Endothelial cell of umbilical vein (primary cell): ENCODE measurements at regions of chr19 and their contacts with region 1.

Region 1: DNA sequence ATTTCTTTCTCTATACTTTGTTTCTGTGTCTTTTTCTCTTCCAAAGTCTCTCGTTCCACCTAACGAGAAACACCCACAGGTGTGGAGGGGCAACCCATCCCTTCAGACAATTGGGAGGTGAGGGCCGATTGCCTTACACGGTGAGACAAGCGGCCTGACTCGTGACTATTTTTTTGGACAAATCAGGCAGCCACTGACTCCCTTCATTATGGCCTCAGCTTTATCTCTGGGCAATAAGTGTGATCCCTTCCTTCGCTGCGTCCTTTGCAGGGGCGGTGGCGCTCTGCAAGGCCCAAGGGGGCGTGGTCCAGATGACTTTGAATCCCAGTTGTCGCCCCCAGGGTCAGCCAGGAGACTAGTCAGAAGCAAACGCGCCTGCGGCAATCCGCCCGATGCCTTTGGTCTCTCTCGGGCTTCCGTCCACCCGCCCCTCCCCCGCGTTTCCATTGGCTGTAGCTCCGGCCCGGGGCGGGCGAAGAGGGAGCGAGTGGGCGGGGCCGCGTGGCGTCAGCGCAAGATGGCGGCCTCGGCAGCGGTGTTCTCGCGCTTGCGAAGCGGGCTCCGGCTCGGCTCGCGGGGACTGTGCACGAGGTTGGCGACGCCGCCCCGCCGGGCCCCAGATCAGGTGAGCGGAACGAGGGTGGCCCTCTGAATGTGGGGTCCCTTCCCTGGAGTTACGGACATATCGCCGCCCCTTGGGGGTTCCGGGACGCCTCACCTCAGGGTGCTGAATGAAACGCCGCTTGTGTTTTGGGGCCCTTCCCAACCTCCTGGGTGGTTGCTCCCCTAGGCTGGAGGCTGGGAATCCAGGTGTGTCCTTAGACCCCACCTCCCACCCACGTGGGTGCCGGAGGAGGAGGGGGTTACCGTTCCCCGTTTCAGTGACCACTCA is at the start of gene TIMM50:
- DNase-seq: peak; percentile 95
- H3K4me3 ChIP-seq: peak within 1 kb of the TSS; percentile 77 to 100 (median 88)
- H3K27ac ChIP-seq: peak within 1 kb of the TSS; percentile 71
- H3K4me1 ChIP-seq: peaks cover 16% of the 10 kb centered on the region
- H3K27me3 ChIP-seq: no peaks in the 10 kb centered on the region
- CTCF ChIP-seq: no peak
- POLR2A ChIP-seq: peak; percentile 70
- total RNA-seq, gene TIMM50: 85.7 and 86.1 TPM in 2 replicates

Region 2: DNA sequence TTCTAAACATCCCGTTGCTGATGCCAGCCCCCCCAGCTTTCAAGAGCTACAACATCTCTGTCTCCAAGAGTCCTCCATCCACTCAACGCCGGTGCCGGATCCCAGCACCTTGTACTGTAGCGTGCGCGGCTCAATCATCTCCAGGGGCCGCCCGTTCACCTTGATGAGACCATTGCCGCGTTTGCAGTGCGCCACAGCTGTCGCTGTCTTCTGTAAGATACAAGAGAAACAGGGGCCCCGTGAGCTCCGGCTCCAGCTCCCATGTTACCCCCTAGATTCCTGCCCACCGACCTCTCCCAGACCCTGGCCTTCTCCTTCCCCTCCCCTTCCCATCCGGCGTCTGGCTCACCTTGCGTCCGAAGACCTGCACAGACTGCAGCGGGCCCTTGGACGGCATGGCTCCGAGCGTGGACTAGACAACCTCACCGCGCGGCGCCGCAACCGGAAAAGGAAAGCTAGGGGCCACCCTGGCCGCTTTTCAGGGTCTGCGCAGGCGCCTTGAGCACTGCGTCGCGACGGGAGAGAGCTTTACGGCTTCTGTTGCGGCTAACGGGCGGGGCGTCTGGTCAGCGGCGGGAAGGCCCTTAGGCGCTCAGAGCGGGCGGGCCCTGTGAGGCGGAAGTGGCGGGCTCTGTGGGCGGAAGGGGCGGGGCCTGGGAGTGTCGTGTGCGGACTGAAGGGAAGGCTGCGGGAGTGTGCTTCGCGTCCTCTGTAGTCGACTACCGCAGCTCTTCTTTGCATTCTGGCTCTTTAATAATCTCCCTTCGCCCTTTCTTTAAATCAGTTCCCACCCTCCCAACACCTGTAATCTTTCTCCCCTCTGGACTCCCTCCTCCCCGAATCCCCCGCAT is 44.9 kb before region 1 on chr19 and contains the start of gene RPS16:
- CTCF ChIA-PET with region 1: interaction called, 8 read pairs
- POLR2A ChIA-PET with region 1: interaction called, 10 read pairs
- dilution Hi-C with region 1: no loop called
- intact Hi-C with region 1: loop called (anchors 2 kb)
- DNase-seq: peak; percentile 98
- H3K4me3 ChIP-seq: peak within 1 kb of the TSS; percentile 96
- H3K27ac ChIP-seq: peak within 1 kb of the TSS; percentile 96
- H3K4me1 ChIP-seq: peaks cover 26% of the 10 kb centered on the region
- H3K27me3 ChIP-seq: no peaks in the 10 kb centered on the region
- CTCF ChIP-seq: no peak
- POLR2A ChIP-seq: peak; percentile 96
- total RNA-seq, gene RPS16: 1,735 and 1,768 TPM in 2 replicates

Region 3: GRCh38 chr19:39445265-39446111 is 35.1 kb before region 1 on chr19 and contains the start of gene SUPT5H:
- CTCF ChIA-PET with region 1: no interaction called
- POLR2A ChIA-PET with region 1: interaction called, 10 read pairs
- dilution Hi-C with region 1: no loop called
- intact Hi-C with region 1: loop called (anchors 1 kb)
- DNase-seq: peak; percentile 98
- H3K4me3 ChIP-seq: peak within 1 kb of the TSS; percentile 85 to 98 (median 94)
- H3K27ac ChIP-seq: peak within 1 kb of the TSS; percentile 94
- H3K4me1 ChIP-seq: peaks cover 20% of the 10 kb centered on the region
- H3K27me3 ChIP-seq: no peaks in the 10 kb centered on the region
- CTCF ChIP-seq: no peak
- POLR2A ChIP-seq: peak; percentile 81
- total RNA-seq, gene SUPT5H: 108 and 120 TPM in 2 replicates

Region 4: GRCh38 chr19:39502640-39503417 is 22.2 kb after region 1 on chr19:
- CTCF ChIA-PET with region 1: interaction called, 3 read pairs
- POLR2A ChIA-PET with region 1: no interaction called
- dilution Hi-C with region 1: no loop called
- intact Hi-C with region 1: loop called (anchors 2 kb)
- DNase-seq: peak; percentile 67
- H3K4me3 ChIP-seq: no peak overlapping the region
- H3K27ac ChIP-seq: no peak overlapping the region
- H3K4me1 ChIP-seq: peaks cover 10% of the 10 kb centered on the region
- H3K27me3 ChIP-seq: peaks cover 31 to 32% of the 10 kb centered on the region in 2 experiments
- CTCF ChIP-seq: peak; percentile 82
- POLR2A ChIP-seq: no peak